ENCODE measurements at regions of chr1 and their contacts with region 1.

Region 1: DNA sequence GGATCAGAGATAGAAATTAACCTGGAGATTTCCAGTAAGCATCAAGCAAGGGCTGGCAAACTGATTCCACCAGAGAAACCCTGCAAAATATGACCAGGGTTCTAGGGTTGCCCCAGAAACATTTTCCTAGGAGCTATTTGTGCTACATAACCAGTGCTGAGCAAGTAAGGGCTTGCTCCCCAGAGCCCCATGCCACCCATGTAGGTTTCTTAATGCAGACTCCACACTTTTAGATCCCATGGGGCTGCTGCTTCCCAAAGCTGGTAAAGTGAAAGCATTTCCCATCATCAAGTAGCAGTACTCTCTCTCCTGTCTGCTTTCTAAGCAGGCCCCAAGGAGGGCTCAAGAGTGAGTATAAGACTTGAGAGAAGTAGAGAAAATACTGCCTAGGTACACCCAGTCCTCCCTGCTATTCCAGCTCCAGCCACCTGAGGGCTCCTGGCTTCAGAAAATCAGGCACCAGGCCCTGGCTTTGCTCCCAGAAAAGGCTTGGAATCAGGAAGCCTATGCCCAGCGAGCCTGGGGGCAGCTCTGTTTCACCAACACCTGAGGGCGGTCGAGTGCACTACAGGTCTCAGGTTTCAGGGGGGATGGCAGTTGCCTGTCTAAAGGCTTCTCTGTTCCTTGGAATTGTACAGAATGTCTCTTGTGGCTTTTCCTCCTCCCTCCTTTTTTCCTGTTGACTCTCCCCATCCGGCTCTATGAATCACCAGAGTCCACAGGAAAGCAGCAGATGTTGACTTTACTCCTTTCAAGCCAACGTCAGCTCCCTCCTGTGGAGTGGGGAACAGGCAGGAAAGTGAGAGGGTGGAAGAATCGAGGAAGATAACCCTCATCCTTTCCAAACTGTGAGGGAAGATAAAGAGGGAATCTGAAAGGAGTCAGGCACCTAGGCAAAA is 6.2 kb upstream of the ANKRD35 start:
- DNase-seq: peak; percentile 87
- H3K4me3 ChIP-seq: peak overlapping the region; percentile 15 to 42
- H3K27ac ChIP-seq: peak overlapping the region; percentile 94 to 98
- H3K4me1 ChIP-seq: peaks cover 21 to 28% of the 10 kb centered on the region in 2 experiments
- H3K27me3 ChIP-seq: no peaks in the 10 kb centered on the region
- CTCF ChIP-seq: peak; percentile 99
- EP300 ChIP-seq: peak; percentile 29 to 76; a peak in 3 of 4 replicates
- RAD21 ChIP-seq: peak; percentile 95

Region 2: DNA sequence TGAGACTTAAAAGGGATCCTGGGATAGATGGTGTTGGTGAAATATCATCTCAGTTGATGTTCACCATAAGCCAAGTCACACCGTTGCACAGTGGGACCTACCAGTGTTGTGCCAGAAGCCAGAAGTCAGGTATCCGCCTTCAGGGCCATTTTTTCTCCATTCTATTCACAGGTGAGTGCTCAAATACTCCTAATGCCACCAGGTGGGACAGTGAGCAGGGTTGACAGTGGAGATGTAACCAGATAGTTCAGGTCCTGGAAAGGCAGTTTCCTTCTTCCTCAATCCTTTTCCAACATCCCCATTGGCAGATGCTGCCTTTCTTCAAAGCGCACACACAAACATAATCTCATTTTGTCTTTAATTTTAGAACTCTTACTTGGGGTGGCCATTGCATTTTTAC is 160.9 kb before region 1 on chr1:
- CTCF ChIA-PET with region 1: no interaction called
- POLR2A ChIA-PET with region 1: no interaction called
- DNase-seq: no peak
- H3K4me3 ChIP-seq: no peak overlapping the region
- H3K27ac ChIP-seq: no peak overlapping the region
- H3K4me1 ChIP-seq: no peaks in the 10 kb centered on the region
- H3K27me3 ChIP-seq: no peaks in the 10 kb centered on the region
- CTCF ChIP-seq: no peak
- EP300 ChIP-seq: no peak
- RAD21 ChIP-seq: no peak

Region 3: GRCh38 chr1:145871994-145872924 is 19.6 kb before region 1 on chr1:
- CTCF ChIA-PET with region 1: interaction called, 12 read pairs
- POLR2A ChIA-PET with region 1: no interaction called
- DNase-seq: no peak
- H3K4me3 ChIP-seq: no peak overlapping the region
- H3K27ac ChIP-seq: no peak overlapping the region
- H3K4me1 ChIP-seq: no peaks in the 10 kb centered on the region
- H3K27me3 ChIP-seq: no peaks in the 10 kb centered on the region
- CTCF ChIP-seq: no peak
- EP300 ChIP-seq: no peak
- RAD21 ChIP-seq: no peak

Region 4: DNA sequence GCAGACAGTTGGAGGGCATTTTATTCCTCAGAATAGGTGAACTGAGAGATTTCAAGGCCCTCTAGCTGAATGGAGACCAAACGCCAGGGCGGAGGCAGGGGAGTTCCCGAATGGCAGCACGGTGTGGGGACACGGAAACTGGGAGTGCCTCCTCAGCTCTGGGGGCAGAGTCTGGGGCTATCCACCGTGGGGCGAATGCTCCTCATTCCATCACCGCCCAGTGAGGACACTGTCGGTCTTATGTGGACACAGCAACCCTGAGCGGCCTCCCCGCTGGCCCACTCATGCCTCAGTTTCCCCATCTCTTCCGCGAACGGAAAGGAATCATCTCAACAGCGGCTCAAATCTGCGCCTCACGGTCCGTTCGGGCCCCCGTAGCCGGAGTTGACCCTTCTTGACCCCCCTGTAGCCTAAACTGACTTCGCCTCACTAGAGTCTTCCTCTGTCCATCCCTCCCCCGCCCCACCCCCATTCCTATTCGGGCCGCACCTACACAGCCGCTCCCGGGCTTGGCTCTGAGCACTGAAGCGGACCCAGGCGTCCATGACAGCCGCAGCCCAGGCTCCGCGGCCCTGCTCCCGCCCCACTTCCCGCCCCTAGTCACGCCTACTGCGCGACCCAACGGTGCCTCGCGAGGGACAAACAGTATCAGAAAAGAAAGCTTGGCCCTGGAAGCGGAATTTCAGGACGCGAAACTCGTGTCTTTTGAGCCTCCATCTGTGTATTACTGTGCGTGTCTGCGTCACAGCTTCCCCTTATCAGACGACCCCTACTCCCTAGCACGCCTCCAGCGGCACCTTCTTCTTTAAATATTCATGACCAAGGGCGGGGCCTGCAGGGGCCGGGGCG is 26.5 kb after region 1 on chr1 and contains the start of gene PEX11B:
- CTCF ChIA-PET with region 1: interaction called, 281 read pairs
- POLR2A ChIA-PET with region 1: no interaction called
- DNase-seq: peak; percentile 90
- H3K4me3 ChIP-seq: peak within 1 kb of the TSS; percentile 83 to 86
- H3K27ac ChIP-seq: peak within 1 kb of the TSS; percentile 85 to 95
- H3K4me1 ChIP-seq: peaks cover 0 to 18% of the 10 kb centered on the region in 2 experiments; a peak in 2 of 4 replicates
- H3K27me3 ChIP-seq: no peaks in the 10 kb centered on the region
- CTCF ChIP-seq: no peak
- EP300 ChIP-seq: no peak
- RAD21 ChIP-seq: no peak
- polyA plus RNA-seq, gene PEX11B: 26.1 and 34.5 TPM in 2 replicates

Region 5: DNA sequence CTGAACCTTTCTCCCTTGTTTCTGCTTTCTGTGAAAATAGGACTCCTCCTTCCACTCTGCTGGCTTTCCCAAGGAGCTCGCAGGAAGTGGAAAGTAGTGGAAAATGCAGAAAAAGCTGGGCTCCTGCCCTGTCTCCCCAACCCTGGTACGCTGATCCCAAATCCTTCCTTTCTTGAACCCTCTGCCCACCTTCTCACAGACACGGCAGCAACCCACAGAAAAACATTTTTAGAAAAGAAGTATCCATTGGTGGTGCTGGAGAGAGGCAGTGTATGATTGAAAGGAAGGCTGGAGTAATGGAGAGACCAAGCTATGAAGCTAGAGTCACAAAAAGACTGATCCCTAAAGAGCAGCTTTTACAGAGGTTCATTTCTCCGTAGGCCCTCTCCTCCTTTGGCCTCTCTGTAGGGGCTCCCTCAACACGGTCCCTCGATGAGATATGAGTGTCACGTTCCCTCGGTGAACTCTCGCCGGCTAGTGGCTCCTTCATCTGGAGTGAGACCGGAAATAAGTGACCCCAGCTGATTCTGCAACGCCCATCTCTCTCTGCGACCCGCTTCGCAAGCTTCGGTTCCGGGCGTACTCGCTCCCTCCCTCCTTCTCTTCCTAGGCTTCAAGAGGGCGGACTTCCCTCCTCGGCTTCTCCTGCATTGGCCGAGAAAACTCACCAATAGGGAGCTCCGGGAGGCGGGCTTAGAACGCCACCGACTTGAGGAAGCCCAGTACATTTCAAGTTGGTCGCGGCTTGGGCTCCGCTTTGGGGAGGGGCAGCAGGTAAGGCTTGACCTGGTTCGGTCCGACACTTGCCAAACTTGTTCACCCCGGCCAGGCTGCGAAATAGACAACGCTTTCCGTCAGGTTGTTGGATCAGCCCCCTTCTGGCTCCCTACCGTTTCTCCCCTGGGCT is 72.4 kb after region 1 on chr1 and contains the starts of genes ANKRD34A and POLR3GL:
- CTCF ChIA-PET with region 1: interaction called, 10 read pairs
- POLR2A ChIA-PET with region 1: no interaction called
- DNase-seq: peak; percentile 86
- H3K4me3 ChIP-seq: peak within 1 kb of the TSS; percentile 77 to 78
- H3K27ac ChIP-seq: peak within 1 kb of the TSS; percentile 83 to 98
- H3K4me1 ChIP-seq: peaks cover 19 to 40% of the 10 kb centered on the region in 2 experiments
- H3K27me3 ChIP-seq: no peaks in the 10 kb centered on the region
- CTCF ChIP-seq: no peak
- EP300 ChIP-seq: no peak
- RAD21 ChIP-seq: no peak
- polyA plus RNA-seq, gene ANKRD34A: 2.6 and 3.6 TPM in 2 replicates
- polyA plus RNA-seq, gene POLR3GL: 15.8 and 17.3 TPM in 2 replicates

Region 6: GRCh38 chr1:145996433-145997015 is 104.7 kb after region 1 on chr1 and contains the start of gene TXNIP:
- CTCF ChIA-PET with region 1: interaction called, 10 read pairs
- POLR2A ChIA-PET with region 1: no interaction called
- DNase-seq: peak; percentile 95
- H3K4me3 ChIP-seq: peak within 1 kb of the TSS; percentile 64 to 90
- H3K27ac ChIP-seq: peak within 1 kb of the TSS; percentile 44 to 98
- H3K4me1 ChIP-seq: peaks cover 14 to 45% of the 10 kb centered on the region in 2 experiments; a peak in 3 of 4 replicates
- H3K27me3 ChIP-seq: no peaks in the 10 kb centered on the region
- CTCF ChIP-seq: no peak
- EP300 ChIP-seq: peak; percentile 55 to 59; a peak in 3 of 4 replicates
- RAD21 ChIP-seq: no peak
- polyA plus RNA-seq, gene TXNIP: 44.6 and 77.3 TPM in 2 replicates

Region 7: DNA sequence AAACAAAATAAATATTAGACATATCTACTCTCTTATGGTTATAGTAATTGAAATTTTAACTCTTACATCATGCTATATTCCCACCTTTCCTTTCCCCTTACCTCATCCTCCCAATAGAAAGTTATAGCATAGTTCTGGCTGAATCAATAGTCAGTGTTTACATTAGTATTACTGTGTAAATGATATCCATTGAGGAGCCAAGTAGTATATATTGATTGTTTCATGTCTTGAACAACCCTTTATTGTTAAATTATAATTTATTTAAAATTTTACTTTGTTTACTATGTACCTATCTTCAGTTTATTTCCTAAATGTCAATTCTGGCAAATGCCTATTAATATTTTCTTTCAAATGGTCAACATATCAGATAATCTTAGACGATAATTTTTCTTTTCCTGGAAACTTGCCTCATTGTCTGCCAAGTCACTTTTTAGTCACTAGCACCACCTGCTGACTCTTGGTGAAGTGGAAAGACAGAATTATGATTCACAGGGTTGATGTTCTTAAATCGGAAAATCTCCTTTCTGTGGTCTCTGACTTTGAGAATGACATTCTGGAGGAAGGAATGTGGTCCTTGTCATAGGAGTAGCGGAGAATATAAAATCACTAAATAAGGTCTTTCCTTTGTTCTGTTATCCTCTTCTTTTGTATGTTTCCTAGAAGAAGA is 121.0 kb after region 1 on chr1:
- CTCF ChIA-PET with region 1: interaction called, 41 read pairs
- POLR2A ChIA-PET with region 1: no interaction called
- DNase-seq: peak; percentile 66
- H3K4me3 ChIP-seq: peak overlapping the region in 1 of 2 experiments; percentile 18; a peak in 1 of 4 replicates
- H3K27ac ChIP-seq: peak overlapping the region in 1 of 2 experiments; percentile 61; a peak in 2 of 4 replicates
- H3K4me1 ChIP-seq: peaks cover 0 to 2% of the 10 kb centered on the region in 2 experiments; a peak in 2 of 4 replicates
- H3K27me3 ChIP-seq: no peaks in the 10 kb centered on the region
- CTCF ChIP-seq: peak; percentile 87
- EP300 ChIP-seq: 0 out of 4 replicates have a peak, but pooled peaks of 1 of the 2 experiments have one; percentile 16
- RAD21 ChIP-seq: peak; percentile 95

Region 8: DNA sequence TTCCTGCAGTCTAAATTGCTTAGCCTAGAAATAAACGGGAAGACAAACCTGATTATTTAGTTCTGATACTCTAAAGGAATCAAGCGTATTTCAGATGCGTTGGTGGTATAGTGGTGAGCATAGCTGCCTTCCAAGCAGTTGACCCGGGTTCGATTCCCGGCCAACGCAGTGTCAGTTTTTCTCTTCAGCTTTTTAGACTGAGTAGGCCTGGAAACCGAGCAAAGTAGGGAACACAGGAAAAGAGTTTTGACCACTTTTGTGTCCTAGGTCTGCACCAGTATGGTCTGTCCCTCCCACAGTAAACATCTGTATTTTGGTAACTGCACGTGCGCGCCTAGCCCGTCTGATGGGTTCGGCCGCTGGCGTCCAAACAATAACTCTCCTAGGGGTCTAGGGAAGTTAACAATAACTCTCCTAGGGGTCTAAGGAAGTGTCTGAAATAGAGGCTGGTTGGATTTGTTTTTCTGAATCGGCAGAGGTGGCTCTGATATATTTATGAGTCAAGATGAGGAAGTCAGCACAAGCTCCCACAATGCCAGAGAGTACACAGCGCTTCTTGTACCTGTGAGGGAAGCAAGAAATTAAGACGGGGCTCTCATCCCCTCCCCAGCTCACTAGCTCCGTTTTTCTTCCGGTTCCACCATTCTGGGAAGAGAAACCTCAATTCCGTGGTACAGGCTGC is 145.3 kb after region 1 on chr1:
- CTCF ChIA-PET with region 1: interaction called, 11 read pairs
- POLR2A ChIA-PET with region 1: no interaction called
- DNase-seq: no peak
- H3K4me3 ChIP-seq: peak overlapping the region; percentile 64 to 91
- H3K27ac ChIP-seq: peak overlapping the region; percentile 78 to 88
- H3K4me1 ChIP-seq: peaks cover 0 to 3% of the 10 kb centered on the region in 2 experiments; a peak in 2 of 4 replicates
- H3K27me3 ChIP-seq: no peaks in the 10 kb centered on the region
- CTCF ChIP-seq: no peak
- EP300 ChIP-seq: peak in 1 of 2 experiments; percentile 17; a peak in 1 of 4 replicates
- RAD21 ChIP-seq: no peak